ENCODE measurements at regions of chr18 and their contacts with region 1.

Region 1: GRCh38 chr18:57389271-57389670 is 36.9 kb downstream of the ST8SIA3 start:
- DNase-seq: no peak

Region 2: DNA sequence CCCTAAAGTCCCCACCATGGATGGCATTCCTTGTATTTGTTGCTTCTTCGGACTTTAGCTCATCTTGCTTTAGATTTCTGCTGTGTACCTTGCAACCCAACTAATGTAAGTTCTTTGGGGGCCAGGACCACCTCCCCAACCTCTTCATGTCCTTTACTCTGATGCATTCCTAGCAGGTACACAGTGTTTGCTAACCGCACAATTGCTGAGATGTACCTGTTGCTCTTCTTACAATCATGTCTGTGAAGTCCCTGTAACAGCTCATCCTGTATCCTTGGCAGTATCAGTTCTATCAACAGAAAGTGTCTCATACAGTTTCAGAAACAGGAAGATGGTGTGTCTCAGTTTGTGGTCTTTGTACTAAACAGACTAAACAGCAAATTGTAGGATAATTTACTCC is 12.8 kb before region 1 on chr18:
- intact Hi-C with region 1: loop called in 1 of 2 experiments (anchors 1 kb)
- DNase-seq: no peak

Region 3: DNA sequence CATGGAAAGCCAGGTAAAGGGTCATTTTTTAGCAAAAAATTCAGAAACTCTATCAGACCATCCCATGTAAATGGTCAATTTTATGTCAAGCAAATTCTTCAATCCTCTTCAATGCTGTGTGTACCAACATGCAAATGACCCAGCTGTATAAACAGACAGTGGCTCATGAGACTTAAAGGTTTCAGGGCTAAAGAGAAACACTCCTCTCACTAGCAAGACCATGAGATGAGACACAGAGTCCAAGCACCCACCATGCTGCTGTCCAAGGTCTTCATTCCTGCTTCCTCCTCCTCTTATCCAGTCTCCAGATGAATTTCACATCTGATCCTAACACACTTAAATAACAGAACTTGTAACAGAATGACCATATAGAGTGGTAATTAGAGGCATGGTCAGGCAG is 15.1 kb after region 1 on chr18:
- intact Hi-C with region 1: no loop called
- DNase-seq: no peak

Region 4: GRCh38 chr18:57475903-57476302 is 86.6 kb after region 1 on chr18:
- intact Hi-C with region 1: no loop called
- DNase-seq: no peak

Measured in posterior vena cava (tissue), 2 donors.